ENCODE measurements at regions of chr19 and their contacts with region 1.

Region 1: GRCh38 chr19:7562646-7563393 is 27.3 kb downstream of the PNPLA6 start:
- DNase-seq: no peak
- ATAC-seq: no peak
- H3K4me3 ChIP-seq: no peak overlapping the region
- H3K27ac ChIP-seq: no peak overlapping the region
- H3K4me1 ChIP-seq: no peaks in the 10 kb centered on the region
- H3K27me3 ChIP-seq: no peaks in the 10 kb centered on the region
- CTCF ChIP-seq: no peak
- EP300 ChIP-seq: no peak
- POLR2A ChIP-seq: no peak
- RAD21 ChIP-seq: no peak

Region 2: GRCh38 chr19:7355151-7355820 is 207.5 kb before region 1 on chr19:
- CTCF ChIA-PET with region 1: interaction called, 6 read pairs
- POLR2A ChIA-PET with region 1: no interaction called
- RAD21 ChIA-PET with region 1: interaction called, 13 read pairs
- SMC1A ChIA-PET with region 1: interaction called, 8 read pairs
- in situ Hi-C with region 1: no loop called
- intact Hi-C with region 1: no loop called
- DNase-seq: no peak
- ATAC-seq: peak; percentile 10; the same call in 2 of the 3 replicates
- H3K4me3 ChIP-seq: no peak overlapping the region
- H3K27ac ChIP-seq: no peak overlapping the region
- H3K4me1 ChIP-seq: peaks cover 11% of the 10 kb centered on the region
- H3K27me3 ChIP-seq: no peaks in the 10 kb centered on the region
- CTCF ChIP-seq: no peak
- EP300 ChIP-seq: no peak
- POLR2A ChIP-seq: no peak
- RAD21 ChIP-seq: no peak

Region 3: GRCh38 chr19:7575434-7576040 is 12.7 kb after region 1 on chr19:
- CTCF ChIA-PET with region 1: interaction called, 11 read pairs
- POLR2A ChIA-PET with region 1: no interaction called
- RAD21 ChIA-PET with region 1: interaction called, 3 read pairs
- SMC1A ChIA-PET with region 1: interaction called, 4 read pairs
- in situ Hi-C with region 1: no loop called
- intact Hi-C with region 1: no loop called
- DNase-seq: no peak
- ATAC-seq: peak; percentile 71
- H3K4me3 ChIP-seq: no peak overlapping the region
- H3K27ac ChIP-seq: no peak overlapping the region
- H3K4me1 ChIP-seq: no peaks in the 10 kb centered on the region
- H3K27me3 ChIP-seq: no peaks in the 10 kb centered on the region
- CTCF ChIP-seq: no peak
- EP300 ChIP-seq: no peak
- POLR2A ChIP-seq: no peak
- RAD21 ChIP-seq: no peak

Region 4: DNA sequence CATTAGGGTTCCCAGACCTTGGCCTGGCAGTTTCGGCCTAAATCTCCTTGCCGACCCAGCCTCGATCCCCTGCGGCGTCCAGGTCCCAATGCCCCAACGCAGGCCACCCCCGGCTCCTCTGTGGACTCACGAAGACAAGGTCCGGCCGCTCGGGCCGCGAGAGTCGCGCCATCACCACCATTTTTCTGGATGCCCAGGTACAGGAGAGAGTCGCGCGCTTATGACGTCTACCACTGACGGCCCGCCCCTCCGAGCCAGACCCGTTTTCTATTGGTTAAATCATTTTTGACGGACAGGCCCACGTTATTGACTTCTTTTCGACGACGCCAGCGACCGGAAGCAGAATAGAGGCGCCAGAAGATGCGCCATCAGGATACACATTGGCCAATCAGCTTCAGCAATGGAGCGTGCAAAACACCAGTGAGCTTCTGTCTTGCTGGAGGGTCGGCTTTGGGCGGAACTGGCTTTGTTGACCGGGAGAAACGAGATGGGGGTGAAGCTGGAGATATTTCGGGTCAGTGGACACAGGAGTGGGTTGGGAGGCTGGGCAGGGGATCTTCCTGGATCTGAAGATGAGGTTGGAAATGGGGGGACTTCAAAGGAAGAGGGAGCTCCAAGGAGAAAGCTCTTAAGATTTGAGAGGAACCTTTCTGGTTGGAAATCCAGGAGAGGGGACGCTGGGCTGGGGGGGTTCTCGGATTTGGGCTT is 66.7 kb after region 1 on chr19 and contains the starts of genes PET100 and XAB2:
- CTCF ChIA-PET with region 1: interaction called, 11 read pairs
- POLR2A ChIA-PET with region 1: no interaction called
- RAD21 ChIA-PET with region 1: interaction called, 11 read pairs
- SMC1A ChIA-PET with region 1: interaction called, 5 read pairs
- in situ Hi-C with region 1: no loop called
- intact Hi-C with region 1: no loop called
- DNase-seq: peak; percentile 99
- ATAC-seq: peak; percentile 100
- H3K4me3 ChIP-seq: peak within 1 kb of the TSS; percentile 96
- H3K27ac ChIP-seq: peak within 1 kb of the TSS; percentile 80
- H3K4me1 ChIP-seq: peaks cover 13% of the 10 kb centered on the region
- H3K27me3 ChIP-seq: no peaks in the 10 kb centered on the region
- CTCF ChIP-seq: no peak
- EP300 ChIP-seq: no peak
- POLR2A ChIP-seq: peak; percentile 83
- RAD21 ChIP-seq: no peak
- polyA plus RNA-seq, gene PET100: 353 to 462 TPM
- polyA plus RNA-seq, gene XAB2: 0.34 to 0.66 TPM

Region 5: DNA sequence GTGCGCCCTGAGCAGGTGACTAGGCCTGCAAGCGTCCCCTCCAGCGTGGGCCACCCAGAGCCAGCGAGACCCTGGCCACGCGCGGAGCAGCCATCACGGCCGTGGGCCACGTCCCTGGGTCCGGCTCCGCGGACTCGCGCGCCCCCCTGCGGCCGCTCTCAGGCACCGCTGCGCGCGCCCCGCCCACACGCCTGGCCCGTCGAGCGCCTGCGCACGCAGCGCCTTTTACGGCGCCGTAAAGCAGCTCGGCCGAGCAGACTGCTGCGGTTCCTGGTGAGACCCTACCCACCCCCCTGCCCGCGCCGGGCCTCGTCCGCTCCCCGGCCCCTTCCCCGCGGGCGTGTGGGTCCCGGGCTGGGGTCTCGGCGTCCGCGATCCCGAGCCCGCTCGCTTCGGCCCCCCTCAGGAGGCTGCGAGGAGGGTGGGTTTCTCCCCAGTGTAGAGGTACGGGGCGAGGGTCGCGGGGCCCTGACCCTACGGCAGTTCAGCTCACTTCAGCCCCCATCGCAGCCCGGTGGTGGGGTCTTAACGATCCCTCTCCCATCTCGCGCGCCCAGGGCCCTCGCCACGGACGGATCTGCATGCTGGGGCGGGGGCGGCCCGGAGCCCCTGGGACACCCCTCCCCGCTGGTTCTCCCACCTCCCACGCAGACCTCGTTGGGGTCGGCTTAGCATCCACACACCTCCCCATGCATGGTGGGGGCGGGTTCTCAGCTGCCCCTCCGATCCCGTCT is 118.0 kb after region 1 on chr19 and contains the start of gene TRAPPC5:
- CTCF ChIA-PET with region 1: interaction called, 31 read pairs
- POLR2A ChIA-PET with region 1: no interaction called
- RAD21 ChIA-PET with region 1: interaction called, 23 read pairs
- SMC1A ChIA-PET with region 1: interaction called, 12 read pairs
- in situ Hi-C with region 1: loop called (anchors 5 kb)
- intact Hi-C with region 1: loop called (anchors 1 kb)
- DNase-seq: no peak
- ATAC-seq: peak; percentile 79
- H3K4me3 ChIP-seq: peak within 1 kb of the TSS; percentile 85
- H3K27ac ChIP-seq: peak within 1 kb of the TSS; percentile 97
- H3K4me1 ChIP-seq: peaks cover 39% of the 10 kb centered on the region
- H3K27me3 ChIP-seq: no peaks in the 10 kb centered on the region
- CTCF ChIP-seq: peak; percentile 64 to 97 (median 94); a peak in 4 of 6 replicates
- EP300 ChIP-seq: no peak
- POLR2A ChIP-seq: 0 out of 2 replicates have a peak, but pooled peaks have one; percentile 65
- RAD21 ChIP-seq: peak; percentile 75
- polyA plus RNA-seq, gene TRAPPC5: 4.2 to 22.5 TPM

Region 6: GRCh38 chr19:8108560-8109445 is 546.0 kb after region 1 on chr19:
- CTCF ChIA-PET with region 1: no interaction called
- POLR2A ChIA-PET with region 1: no interaction called
- RAD21 ChIA-PET with region 1: no interaction called
- SMC1A ChIA-PET with region 1: no interaction called
- in situ Hi-C with region 1: no loop called
- intact Hi-C with region 1: no loop called
- DNase-seq: no peak
- ATAC-seq: no peak
- H3K4me3 ChIP-seq: no peak overlapping the region
- H3K27ac ChIP-seq: no peak overlapping the region
- H3K4me1 ChIP-seq: no peaks in the 10 kb centered on the region
- H3K27me3 ChIP-seq: no peaks in the 10 kb centered on the region
- CTCF ChIP-seq: no peak
- EP300 ChIP-seq: no peak
- POLR2A ChIP-seq: no peak
- RAD21 ChIP-seq: no peak

Measured in GM12878 (cell line).